Heart left ventricle (tissue), 16 donors: ENCODE measurements at regions of chr15 and their contacts with region 1.

Region 1: GRCh38 chr15:59099162-59099685 is 5.7 kb upstream of the CCNB2 start:
- DNase-seq: no peak
- ATAC-seq: no peak
- H3K4me3 ChIP-seq: no peak overlapping the region
- H3K27ac ChIP-seq: no peak overlapping the region
- H3K4me1 ChIP-seq: peaks cover 0 to 2% (median 0%) of the 10 kb centered on the region in 12 donors
- H3K27me3 ChIP-seq: no peaks in the 10 kb centered on the region
- CTCF ChIP-seq: no peak
- POLR2A ChIP-seq: no peak

Region 2: DNA sequence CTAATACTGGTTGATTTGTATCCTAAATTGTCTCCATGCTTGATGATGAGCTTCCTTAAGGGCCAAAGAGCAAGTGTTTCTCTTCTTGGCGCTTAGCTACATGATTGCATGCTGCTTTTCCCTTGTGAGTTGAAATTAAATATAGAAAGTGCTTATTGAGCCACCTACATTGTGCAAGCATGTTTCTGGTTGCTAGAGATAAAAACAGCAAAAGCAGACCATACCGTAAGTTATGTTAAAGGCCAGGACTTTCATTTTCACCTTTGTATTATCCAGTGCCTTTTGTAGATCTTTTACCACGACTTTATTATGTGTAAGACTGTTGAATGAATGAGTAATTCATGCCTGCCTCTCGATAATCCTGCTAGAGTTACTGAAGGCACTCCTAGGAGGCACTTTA is 36.2 kb before region 1 on chr15:
- intact Hi-C with region 1: loop called in 1 of 10 experiments (anchors 5 kb)
- DNase-seq: no peak
- ATAC-seq: no peak
- H3K4me3 ChIP-seq: no peak overlapping the region
- H3K27ac ChIP-seq: no peak overlapping the region
- H3K4me1 ChIP-seq: peaks cover 0 to 13% (median 7%) of the 10 kb centered on the region in 12 donors
- H3K27me3 ChIP-seq: no peaks in the 10 kb centered on the region
- CTCF ChIP-seq: no peak
- POLR2A ChIP-seq: no peak

Region 3: GRCh38 chr15:59116141-59116540 is 16.9 kb after region 1 on chr15:
- intact Hi-C with region 1: no loop called
- DNase-seq: no peak
- ATAC-seq: no peak
- H3K4me3 ChIP-seq: no peak overlapping the region
- H3K27ac ChIP-seq: no peak overlapping the region
- H3K4me1 ChIP-seq: no peaks in the 10 kb centered on the region
- H3K27me3 ChIP-seq: no peaks in the 10 kb centered on the region
- CTCF ChIP-seq: no peak
- POLR2A ChIP-seq: no peak